IMR-90 (cell line): ENCODE measurements at regions of chr5 and their contacts with region 1.

Region 1: DNA sequence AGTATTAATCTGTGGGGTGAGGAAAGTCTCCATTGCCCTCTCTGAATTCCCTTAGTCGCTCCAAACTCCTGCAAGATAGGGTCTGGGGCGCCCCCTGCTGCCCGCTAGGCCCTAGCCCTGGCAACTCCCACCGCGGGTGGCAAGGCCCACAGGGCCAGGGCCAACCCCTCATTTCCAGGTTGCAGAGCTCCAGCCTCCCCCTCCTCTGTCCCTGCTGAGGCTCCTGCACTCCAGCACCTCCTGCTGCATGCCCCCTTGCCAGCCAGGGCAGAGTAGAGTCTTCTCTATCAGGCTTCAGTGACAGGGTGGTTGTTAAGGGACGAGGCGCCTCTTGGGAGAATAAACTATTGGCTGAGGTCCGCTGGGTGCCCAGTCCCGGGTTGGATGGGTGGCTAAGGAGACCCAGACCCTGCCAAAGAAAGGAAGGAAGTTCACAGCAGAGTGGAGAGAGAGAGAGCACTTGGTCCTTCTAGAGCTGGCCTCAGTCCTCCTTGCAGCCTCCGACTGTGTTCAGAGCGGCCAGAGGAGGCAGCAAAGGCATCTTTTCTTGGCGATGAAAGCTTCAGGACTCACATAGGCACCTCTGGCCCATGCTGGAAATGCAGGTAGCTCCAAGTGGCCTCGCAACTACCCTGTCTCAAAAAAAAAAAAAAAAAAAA is 45.6 kb downstream of the SAR1B start:
- DNase-seq: peak; percentile 71
- ATAC-seq: peak; percentile 98
- H3K4me3 ChIP-seq: no peak overlapping the region
- H3K27ac ChIP-seq: no peak overlapping the region
- H3K4me1 ChIP-seq: peaks cover 3% of the 10 kb centered on the region; the same call in 1 of the 2 replicates
- H3K27me3 ChIP-seq: no peaks in the 10 kb centered on the region
- CTCF ChIP-seq: peak; percentile 89
- POLR2A ChIP-seq: no peak
- RAD21 ChIP-seq: peak; percentile 89

Region 2: GRCh38 chr5:134184155-134185135 is 402.6 kb before region 1 on chr5:
- CTCF ChIA-PET with region 1: interaction called, 6 read pairs
- POLR2A ChIA-PET with region 1: no interaction called
- dilution Hi-C with region 1: no loop called
- in situ Hi-C with region 1: loop called (anchors 10 kb)
- intact Hi-C with region 1: loop called (anchors 2 kb)
- DNase-seq: peak; percentile 56
- ATAC-seq: peak; percentile 99
- H3K4me3 ChIP-seq: no peak overlapping the region
- H3K27ac ChIP-seq: no peak overlapping the region
- H3K4me1 ChIP-seq: no peaks in the 10 kb centered on the region
- H3K27me3 ChIP-seq: no peaks in the 10 kb centered on the region
- CTCF ChIP-seq: peak; percentile 89
- POLR2A ChIP-seq: no peak
- RAD21 ChIP-seq: peak; percentile 93

Region 3: GRCh38 chr5:134304311-134304710 is 282.7 kb before region 1 on chr5:
- CTCF ChIA-PET with region 1: interaction called, 17 read pairs
- POLR2A ChIA-PET with region 1: no interaction called
- dilution Hi-C with region 1: no loop called
- in situ Hi-C with region 1: loop called (anchors 5 kb)
- intact Hi-C with region 1: loop called (anchors 1 kb)
- DNase-seq: no peak
- ATAC-seq: no peak
- H3K4me3 ChIP-seq: no peak overlapping the region
- H3K27ac ChIP-seq: no peak overlapping the region
- H3K4me1 ChIP-seq: no peaks in the 10 kb centered on the region
- H3K27me3 ChIP-seq: no peaks in the 10 kb centered on the region
- CTCF ChIP-seq: no peak
- POLR2A ChIP-seq: no peak
- RAD21 ChIP-seq: no peak

Region 4: GRCh38 chr5:134394932-134395331 is 192.1 kb before region 1 on chr5:
- CTCF ChIA-PET with region 1: interaction called, 3 read pairs
- POLR2A ChIA-PET with region 1: no interaction called
- dilution Hi-C with region 1: no loop called
- in situ Hi-C with region 1: no loop called
- intact Hi-C with region 1: loop called (anchors 5 kb)
- DNase-seq: no peak
- ATAC-seq: no peak
- H3K4me3 ChIP-seq: no peak overlapping the region
- H3K27ac ChIP-seq: no peak overlapping the region
- H3K4me1 ChIP-seq: peaks cover 6% of the 10 kb centered on the region
- H3K27me3 ChIP-seq: no peaks in the 10 kb centered on the region
- CTCF ChIP-seq: no peak
- POLR2A ChIP-seq: no peak
- RAD21 ChIP-seq: no peak

Region 5: GRCh38 chr5:134541736-134542376 is 45.1 kb before region 1 on chr5:
- CTCF ChIA-PET with region 1: no interaction called
- POLR2A ChIA-PET with region 1: no interaction called
- dilution Hi-C with region 1: no loop called
- in situ Hi-C with region 1: no loop called
- intact Hi-C with region 1: no loop called
- DNase-seq: peak; percentile 64
- ATAC-seq: peak; percentile 97
- H3K4me3 ChIP-seq: no peak overlapping the region
- H3K27ac ChIP-seq: no peak overlapping the region
- H3K4me1 ChIP-seq: peaks cover under 1% of the 10 kb centered on the region
- H3K27me3 ChIP-seq: no peaks in the 10 kb centered on the region
- CTCF ChIP-seq: no peak
- POLR2A ChIP-seq: no peak
- RAD21 ChIP-seq: 0 out of 2 replicates have a peak, but pooled peaks have one; percentile 8

Region 6: GRCh38 chr5:135024956-135025729 is 438.1 kb after region 1 on chr5:
- CTCF ChIA-PET with region 1: no interaction called
- POLR2A ChIA-PET with region 1: no interaction called
- dilution Hi-C with region 1: no loop called
- in situ Hi-C with region 1: no loop called
- intact Hi-C with region 1: no loop called
- DNase-seq: no peak
- ATAC-seq: no peak
- H3K4me3 ChIP-seq: no peak overlapping the region
- H3K27ac ChIP-seq: no peak overlapping the region
- H3K4me1 ChIP-seq: peaks cover 8% of the 10 kb centered on the region; the same call in 1 of the 2 replicates
- H3K27me3 ChIP-seq: no peaks in the 10 kb centered on the region
- CTCF ChIP-seq: no peak
- POLR2A ChIP-seq: no peak
- RAD21 ChIP-seq: no peak